WTC11 (cell line): ENCODE measurements at regions of chr14 and their contacts with region 1.

Region 1: DNA sequence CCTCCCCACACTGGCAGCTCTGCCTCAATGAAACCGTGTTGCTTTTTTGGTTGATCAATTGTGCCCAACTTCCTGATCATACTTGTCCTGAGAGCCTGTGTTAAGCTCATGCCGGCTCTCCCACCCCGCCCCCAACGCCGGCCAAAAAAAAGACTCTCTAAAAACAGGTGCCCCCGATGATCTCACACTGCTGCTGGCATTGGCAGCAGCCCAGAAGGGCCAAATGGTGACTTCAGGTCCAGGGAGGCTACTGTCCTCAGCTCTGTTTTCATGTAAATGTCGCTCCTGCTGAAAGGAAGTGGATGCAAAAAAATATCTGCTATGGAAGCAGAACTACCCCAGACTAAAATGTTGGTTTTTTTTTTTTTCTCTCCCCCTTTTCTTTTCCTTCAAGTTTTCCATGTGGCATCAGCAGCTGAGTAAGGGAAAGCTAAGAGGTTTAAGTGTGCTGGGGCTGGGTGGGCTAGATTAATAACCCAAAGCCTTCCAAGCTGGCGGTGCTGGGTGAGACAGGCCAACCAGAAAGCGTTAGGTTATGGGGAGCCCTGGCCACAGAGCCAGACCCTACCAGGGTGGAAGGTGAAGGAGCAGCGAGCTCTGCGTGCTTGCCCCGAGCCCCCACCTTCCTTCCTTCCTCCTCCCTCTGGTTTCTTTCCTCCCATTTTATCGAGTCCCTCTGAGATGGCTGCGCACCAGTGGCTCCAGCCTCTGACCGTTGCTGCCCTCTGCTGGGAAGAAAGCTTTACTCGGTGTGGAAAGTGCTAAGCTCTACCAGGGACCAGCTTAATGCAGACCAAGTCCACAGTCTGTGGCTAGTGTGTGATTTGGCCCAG is 396.1 kb downstream of the NRXN3 start:
- DNase-seq: peak; percentile 90
- ATAC-seq: peak; percentile 95
- H3K4me3 Mint-ChIP-seq: peak overlapping the region; percentile 42
- H3K27ac Mint-ChIP-seq: no peak overlapping the region
- H3K4me1 Mint-ChIP-seq: peaks cover 11% of the 10 kb centered on the region
- H3K27me3 Mint-ChIP-seq: no peaks in the 10 kb centered on the region
- CTCF ChIP-seq: peak; percentile 43; the same call in 1 of the 2 replicates

Region 2: DNA sequence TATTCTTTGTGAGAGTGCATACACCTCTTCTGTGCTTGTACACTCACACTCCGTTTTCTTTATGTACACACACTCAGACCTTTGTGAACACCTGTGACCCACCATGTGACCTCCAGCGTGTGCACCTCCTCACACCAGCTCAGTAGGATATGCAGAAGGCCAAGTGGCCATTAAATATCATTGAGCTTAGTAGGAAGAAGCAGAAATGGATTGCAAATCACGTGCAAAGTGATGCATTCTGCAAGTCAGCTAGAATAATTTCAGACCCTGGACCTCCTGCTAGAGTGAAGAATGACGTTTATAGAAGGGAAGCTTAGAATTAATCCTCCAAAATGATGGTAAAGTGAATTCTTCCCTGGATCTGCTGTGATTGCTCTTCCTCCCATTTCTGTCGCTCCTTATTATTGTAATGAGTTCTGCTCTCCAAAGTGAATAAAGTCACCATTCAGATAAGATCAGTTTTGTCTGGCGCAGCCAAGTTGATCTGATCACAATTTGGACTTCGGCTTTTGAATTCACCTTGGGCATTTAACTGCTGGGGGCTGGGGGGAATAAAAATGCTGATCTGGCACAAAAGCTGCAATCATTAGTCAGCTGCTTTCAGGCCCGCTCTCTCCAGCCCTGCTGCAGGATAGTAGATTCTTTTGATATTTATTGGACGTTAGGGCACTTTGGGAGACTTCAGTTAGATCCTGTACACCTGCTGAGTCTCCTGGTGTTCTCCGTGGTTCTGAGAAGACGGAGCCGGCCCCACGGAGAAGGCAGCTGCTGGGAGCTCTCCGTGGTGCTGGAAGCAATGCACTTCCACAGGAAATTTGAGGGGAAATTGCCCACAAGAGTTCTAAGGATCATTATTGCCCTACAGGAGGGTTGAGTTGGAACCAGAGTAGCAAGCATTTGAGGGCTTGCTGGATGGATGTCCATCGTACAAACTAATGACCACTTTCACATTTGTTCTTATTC is 408.5 kb before region 1 on chr14:
- CTCF ChIA-PET with region 1: interaction called, 11 read pairs
- POLR2A ChIA-PET with region 1: no interaction called
- DNase-seq: peak; percentile 57
- ATAC-seq: no peak
- H3K4me3 Mint-ChIP-seq: no peak overlapping the region
- H3K27ac Mint-ChIP-seq: no peak overlapping the region
- H3K4me1 Mint-ChIP-seq: peaks cover 30% of the 10 kb centered on the region
- H3K27me3 Mint-ChIP-seq: no peaks in the 10 kb centered on the region; the same call in 1 of the 2 replicates
- CTCF ChIP-seq: no peak

Region 3: DNA sequence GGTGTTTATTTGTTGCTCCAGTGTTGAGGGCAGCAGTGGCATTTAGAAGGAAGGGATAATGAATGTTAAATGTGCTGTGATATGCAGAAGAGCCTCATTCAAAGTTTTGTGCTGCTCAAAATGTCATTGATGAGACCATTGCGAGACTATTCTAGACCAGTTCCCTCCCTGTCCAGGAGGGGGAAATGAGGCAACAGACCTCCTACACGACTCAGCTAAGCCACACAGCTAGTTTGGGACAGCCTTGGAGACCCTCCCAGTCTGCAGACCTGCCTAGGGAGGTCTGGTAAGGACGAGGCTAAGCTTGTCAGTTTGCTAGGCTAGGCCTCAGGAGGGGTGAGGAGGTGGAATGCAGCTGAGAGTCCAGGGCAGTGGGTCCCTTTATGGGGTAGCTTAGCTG is 280.0 kb before region 1 on chr14:
- CTCF ChIA-PET with region 1: interaction called, 12 read pairs
- POLR2A ChIA-PET with region 1: no interaction called
- DNase-seq: no peak
- ATAC-seq: peak; percentile 78
- H3K4me3 Mint-ChIP-seq: no peak overlapping the region
- H3K27ac Mint-ChIP-seq: no peak overlapping the region
- H3K4me1 Mint-ChIP-seq: peaks cover 15% of the 10 kb centered on the region
- H3K27me3 Mint-ChIP-seq: no peaks in the 10 kb centered on the region
- CTCF ChIP-seq: no peak

Region 4: DNA sequence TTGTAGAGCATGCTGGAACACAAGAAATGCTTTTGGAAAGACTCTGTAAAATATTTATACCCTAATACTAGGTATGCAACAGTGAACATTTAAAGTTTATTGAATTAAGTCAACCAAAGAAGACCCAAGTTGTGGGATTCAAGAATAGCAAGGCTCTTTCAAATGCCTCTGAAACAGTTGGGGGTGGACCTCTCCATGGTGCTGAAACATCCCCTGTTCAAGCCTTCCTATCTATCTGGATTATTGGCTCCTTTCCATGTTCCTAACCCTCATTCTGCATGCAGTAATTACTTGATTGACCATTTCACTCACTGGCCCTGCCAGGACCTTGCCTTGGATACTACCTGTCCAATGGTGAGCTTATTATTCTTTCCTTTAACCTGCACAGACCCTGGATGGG is 46.4 kb before region 1 on chr14:
- CTCF ChIA-PET with region 1: interaction called, 10 read pairs
- POLR2A ChIA-PET with region 1: no interaction called
- DNase-seq: peak; percentile 79
- ATAC-seq: peak; percentile 46; the same call in 1 of the 2 replicates
- H3K4me3 Mint-ChIP-seq: no peak overlapping the region
- H3K27ac Mint-ChIP-seq: no peak overlapping the region
- H3K4me1 Mint-ChIP-seq: peaks cover 15% of the 10 kb centered on the region
- H3K27me3 Mint-ChIP-seq: no peaks in the 10 kb centered on the region; the same call in none of the 2 replicates
- CTCF ChIP-seq: no peak

Region 5: DNA sequence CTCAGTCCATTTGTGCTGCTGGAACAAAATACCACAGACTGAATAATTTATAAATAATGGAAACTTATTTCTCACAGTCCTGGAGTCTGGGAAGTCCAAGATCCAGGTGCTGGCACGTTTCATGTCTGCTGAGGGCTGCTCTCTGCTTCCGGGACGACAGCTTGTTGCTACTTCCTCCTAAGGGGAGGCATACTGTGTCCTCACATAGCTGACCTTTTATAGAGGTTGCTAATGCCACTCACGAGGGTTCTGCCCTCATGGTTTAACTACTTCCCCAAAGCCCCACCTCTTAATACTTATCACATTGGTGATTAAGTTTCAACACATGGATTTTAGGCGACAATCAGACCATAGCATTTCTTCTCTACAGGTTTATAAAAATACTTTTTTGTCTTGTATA is 15.0 kb after region 1 on chr14:
- CTCF ChIA-PET with region 1: interaction called, 40 read pairs
- POLR2A ChIA-PET with region 1: no interaction called
- DNase-seq: no peak
- ATAC-seq: no peak
- H3K4me3 Mint-ChIP-seq: no peak overlapping the region
- H3K27ac Mint-ChIP-seq: no peak overlapping the region
- H3K4me1 Mint-ChIP-seq: no peaks in the 10 kb centered on the region
- H3K27me3 Mint-ChIP-seq: no peaks in the 10 kb centered on the region; the same call in 1 of the 2 replicates
- CTCF ChIP-seq: no peak

Region 6: DNA sequence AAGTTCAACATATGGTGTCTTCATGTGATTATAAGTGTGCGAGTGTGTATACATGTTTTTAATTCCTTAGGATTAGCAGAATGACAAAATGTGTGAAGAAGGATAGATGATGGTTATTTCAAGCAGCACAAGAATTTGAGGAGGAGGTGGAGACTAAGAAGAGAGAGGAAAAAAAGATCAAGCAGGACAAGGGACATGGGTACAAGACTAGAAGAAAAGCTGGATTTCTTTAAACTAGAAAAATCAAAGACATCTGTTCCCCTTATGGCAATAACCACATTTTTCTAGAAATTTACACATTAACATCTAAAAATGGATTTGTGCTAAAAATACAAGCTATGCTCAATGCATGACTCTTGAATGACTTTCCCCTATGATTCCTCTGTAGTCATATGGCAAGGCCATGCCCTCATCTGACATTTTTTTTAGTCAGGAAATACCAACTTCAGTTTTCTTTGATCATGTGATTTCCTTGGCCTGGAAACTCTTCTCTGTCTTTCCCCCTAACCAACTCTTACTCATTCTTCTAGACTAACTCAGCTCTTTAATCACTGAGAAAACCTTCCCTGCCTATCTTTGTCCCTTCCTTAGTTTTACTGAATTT is 39.8 kb after region 1 on chr14:
- CTCF ChIA-PET with region 1: no interaction called
- POLR2A ChIA-PET with region 1: no interaction called
- DNase-seq: no peak
- ATAC-seq: no peak
- H3K4me3 Mint-ChIP-seq: no peak overlapping the region
- H3K27ac Mint-ChIP-seq: no peak overlapping the region
- H3K4me1 Mint-ChIP-seq: peaks cover 5% of the 10 kb centered on the region; the same call in 1 of the 2 replicates
- H3K27me3 Mint-ChIP-seq: no peaks in the 10 kb centered on the region
- CTCF ChIP-seq: no peak